Right lobe of liver (tissue), 6 donors: ENCODE measurements at regions of chr3 and their contacts with region 1.

Region 1: GRCh38 chr3:54374214-54374855 is 252.0 kb downstream of the CACNA2D3 start:
- DNase-seq: peak in 2 of 3 donors; percentile 30 to 63
- ATAC-seq: peak; percentile 80 to 91 (median 85)
- H3K4me3 ChIP-seq: no peak overlapping the region
- H3K27ac ChIP-seq: no peak overlapping the region
- H3K4me1 ChIP-seq: no peaks in the 10 kb centered on the region
- H3K27me3 ChIP-seq: no peaks in the 10 kb centered on the region
- CTCF ChIP-seq: peak; percentile 55 to 78 (median 73)
- POLR2A ChIP-seq: no peak

Region 2: DNA sequence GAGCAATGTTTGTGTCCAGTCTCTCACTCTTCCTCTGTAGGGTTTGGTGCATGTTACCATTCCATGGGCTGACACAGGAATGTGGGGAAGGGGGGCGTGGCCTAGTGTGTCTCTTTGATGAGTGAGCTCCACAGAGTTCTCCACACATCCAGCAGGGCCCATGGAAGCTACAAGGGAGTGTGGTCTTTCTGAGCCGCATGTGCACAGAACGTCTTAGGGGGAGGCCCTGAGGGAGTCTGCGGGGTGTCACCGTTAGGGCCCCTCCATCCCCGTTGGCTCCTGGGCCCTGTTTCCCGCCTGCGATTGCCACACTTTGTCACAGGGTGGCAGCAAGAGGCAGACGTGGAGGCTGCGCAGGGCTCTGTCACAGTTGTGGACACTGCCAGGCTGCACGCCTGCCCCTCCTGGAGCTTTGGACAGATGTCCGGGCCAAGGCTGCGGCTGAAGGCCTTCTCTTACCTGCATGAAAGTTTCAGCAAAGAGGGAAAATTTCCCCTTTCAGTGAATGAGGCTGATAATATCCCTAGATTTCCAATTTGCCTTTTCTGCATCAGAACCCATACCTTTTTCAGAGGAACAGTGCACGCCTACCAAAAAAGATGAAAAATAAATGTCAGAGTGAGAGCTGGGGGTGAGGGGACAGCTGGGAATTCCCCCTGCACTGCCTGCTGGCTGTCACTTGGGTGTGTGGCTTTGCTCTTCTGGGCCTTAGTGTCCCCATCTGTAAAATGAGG is 227.7 kb before region 1 on chr3:
- intact Hi-C with region 1: loop called (anchors 5 to 10 kb)
- DNase-seq: peak; percentile 77 to 82 (median 78)
- ATAC-seq: peak; percentile 92 to 100 (median 98)
- H3K4me3 ChIP-seq: no peak overlapping the region
- H3K27ac ChIP-seq: no peak overlapping the region
- H3K4me1 ChIP-seq: no peaks in the 10 kb centered on the region
- H3K27me3 ChIP-seq: no peaks in the 10 kb centered on the region
- CTCF ChIP-seq: peak; percentile 63 to 85 (median 74)
- POLR2A ChIP-seq: no peak

Region 3: GRCh38 chr3:54153477-54153876 is 220.9 kb before region 1 on chr3:
- intact Hi-C with region 1: loop called (anchors 5 to 10 kb)
- DNase-seq: no peak
- ATAC-seq: no peak
- H3K4me3 ChIP-seq: no peak overlapping the region
- H3K27ac ChIP-seq: no peak overlapping the region
- H3K4me1 ChIP-seq: no peaks in the 10 kb centered on the region
- H3K27me3 ChIP-seq: no peaks in the 10 kb centered on the region
- CTCF ChIP-seq: no peak
- POLR2A ChIP-seq: no peak